ENCODE measurements at regions of chr15 and their contacts with region 1.

Region 1: DNA sequence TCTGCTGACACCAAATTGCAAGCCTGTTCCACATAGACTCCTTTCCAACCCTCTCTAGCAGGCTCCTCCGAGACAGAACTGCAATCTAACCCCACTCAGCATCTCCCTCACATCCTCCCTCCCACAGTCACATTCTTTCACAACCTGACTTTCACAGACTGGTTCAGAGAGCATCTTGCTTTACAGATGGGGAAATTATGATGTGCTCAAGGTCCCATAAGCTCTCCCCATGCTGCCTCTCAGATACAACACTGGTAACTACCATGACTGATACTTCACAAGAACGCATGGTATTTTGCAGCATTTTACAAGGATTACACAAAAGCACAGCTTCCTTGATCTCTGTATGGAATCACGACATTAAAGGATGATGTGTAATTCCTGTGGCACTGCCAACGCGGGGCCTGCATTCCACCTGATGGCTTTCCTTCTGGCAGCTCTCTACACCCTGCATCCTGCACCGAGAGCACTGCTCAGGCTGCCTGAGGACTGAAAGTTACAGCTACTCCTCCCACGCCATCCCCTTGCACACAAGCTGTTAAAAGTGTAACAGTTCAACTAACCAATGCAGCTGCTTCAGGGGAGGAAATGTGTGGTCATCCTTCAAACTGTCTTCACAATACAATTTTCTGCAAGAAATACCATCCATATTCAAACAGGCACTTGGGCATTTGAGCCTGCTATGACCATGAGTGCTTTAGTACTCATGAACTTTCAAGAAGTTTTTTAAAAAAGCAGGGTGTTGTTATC is 27.6 kb downstream of the TBC1D2B start:
- DNase-seq: peak; percentile 83
- H3K4me3 Mint-ChIP-seq: peak overlapping the region; percentile 16
- H3K27ac Mint-ChIP-seq: peak overlapping the region; percentile 80
- H3K4me1 Mint-ChIP-seq: peaks cover 78% of the 10 kb centered on the region
- H3K27me3 Mint-ChIP-seq: no peaks in the 10 kb centered on the region

Region 2: DNA sequence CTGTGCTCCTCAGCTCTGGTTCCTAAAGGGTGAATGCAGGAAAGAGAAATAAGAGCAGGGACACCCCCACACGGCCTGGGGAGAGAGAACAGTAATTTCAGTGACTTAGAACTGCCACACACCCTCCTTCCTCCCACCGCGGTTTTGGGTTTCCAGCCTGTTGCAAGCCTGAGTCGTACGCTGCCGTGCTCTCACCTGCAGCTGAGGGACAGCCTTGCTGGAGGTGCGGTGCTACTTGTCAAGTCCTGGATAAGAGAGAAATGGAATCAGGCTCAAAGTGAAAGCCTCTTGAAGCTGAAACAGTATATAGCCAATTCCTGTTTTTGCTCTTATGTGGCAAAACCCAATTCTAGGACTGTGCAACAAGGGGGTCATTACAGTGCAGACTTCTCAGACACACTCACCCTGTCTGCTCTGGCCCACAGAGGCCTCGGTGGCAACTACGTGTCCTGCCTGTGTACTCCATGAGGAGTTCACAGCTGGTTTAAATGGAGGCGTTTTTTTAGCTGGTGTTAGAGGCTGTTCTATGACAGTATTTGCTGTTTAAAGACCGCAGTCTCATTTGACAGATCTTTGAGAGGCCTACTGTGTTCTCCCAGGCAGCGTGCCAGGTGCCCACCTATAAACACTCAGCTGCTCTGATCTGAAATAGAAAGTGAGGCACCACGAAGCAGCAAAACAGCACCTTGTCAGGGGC is 15.2 kb before region 1 on chr15:
- CTCF ChIA-PET with region 1: interaction called, 18 read pairs
- intact Hi-C with region 1: loop called (anchors 1 kb)
- DNase-seq: peak; percentile 97
- H3K4me3 Mint-ChIP-seq: peak overlapping the region; percentile 38
- H3K27ac Mint-ChIP-seq: peak overlapping the region; percentile 65
- H3K4me1 Mint-ChIP-seq: peaks cover 78% of the 10 kb centered on the region
- H3K27me3 Mint-ChIP-seq: no peaks in the 10 kb centered on the region

Region 3: GRCh38 chr15:78060232-78060631 is 10.4 kb after region 1 on chr15:
- CTCF ChIA-PET with region 1: interaction called, 8 read pairs
- intact Hi-C with region 1: loop called (anchors 1 kb)
- DNase-seq: peak; percentile 39
- H3K4me3 Mint-ChIP-seq: no peak overlapping the region
- H3K27ac Mint-ChIP-seq: no peak overlapping the region
- H3K4me1 Mint-ChIP-seq: peaks cover 59% of the 10 kb centered on the region
- H3K27me3 Mint-ChIP-seq: no peaks in the 10 kb centered on the region

Region 4: DNA sequence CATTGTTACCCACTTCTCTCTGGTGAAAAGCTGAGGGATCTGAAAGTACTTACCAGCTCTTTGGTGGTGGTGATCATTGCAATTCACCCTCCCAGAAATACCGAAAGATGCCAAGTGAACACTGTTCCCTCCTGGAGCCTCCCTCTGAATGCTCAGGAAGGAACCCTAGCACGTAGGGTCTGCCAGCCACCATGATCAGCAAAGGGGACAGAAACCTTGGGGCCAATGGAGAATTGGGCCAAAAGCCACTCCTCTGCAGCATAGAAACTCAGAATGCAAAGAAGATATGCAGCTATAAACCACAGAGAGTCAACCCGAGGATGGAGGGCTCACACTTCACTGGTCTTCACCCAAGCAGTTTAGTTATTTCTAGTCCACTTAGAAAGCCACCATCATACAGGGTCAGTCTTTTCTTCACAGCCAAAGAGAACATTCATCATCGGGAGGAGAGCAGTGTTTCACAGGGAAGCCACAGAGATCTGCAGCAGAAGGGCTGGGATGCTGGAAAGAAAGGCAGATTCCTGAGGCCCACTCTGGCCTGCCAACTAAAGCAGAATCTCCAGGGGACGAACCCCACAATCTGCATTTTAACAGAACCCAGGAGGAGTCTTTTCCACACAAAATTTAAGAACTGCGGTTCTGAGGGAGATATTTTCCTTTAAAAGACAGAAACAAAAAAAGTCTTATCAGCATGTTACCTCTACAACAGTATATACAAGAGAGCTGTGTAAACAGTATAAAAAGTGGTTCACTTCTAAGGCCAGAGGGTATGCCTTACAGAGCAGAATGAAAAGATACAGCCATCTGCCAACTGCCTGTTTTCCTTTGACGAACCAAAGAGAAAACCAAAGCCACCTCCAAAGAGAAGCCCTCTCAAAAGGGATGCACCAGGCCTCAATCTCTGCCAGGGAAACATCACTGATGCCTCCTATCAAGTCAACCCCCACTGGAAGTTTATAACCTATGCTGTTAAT is 16.4 kb after region 1 on chr15:
- CTCF ChIA-PET with region 1: interaction called, 10 read pairs
- intact Hi-C with region 1: loop called (anchors 1 kb)
- DNase-seq: no peak
- H3K4me3 Mint-ChIP-seq: no peak overlapping the region
- H3K27ac Mint-ChIP-seq: peak overlapping the region; percentile 34
- H3K4me1 Mint-ChIP-seq: peaks cover 12% of the 10 kb centered on the region
- H3K27me3 Mint-ChIP-seq: no peaks in the 10 kb centered on the region

Region 5: DNA sequence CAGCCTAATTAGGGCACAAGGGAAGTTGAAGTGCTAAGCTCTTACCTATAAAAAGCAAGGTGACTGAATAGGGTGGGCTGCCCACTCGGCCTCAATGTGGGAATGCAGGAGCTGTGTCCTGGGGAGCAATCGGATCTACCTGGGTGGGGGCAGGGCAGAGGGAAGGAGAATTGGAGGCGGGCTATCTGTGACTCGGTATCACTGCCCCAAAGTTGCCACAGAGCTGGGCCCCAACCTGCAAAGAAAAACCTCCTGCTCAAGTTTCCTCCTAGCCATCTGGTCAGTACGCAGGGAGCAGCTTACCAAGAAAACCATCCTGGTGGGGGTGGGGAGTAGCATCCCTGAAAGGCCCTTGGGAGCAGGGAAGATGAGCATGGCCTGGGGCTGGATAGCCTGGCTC is 70.7 kb after region 1 on chr15:
- CTCF ChIA-PET with region 1: no interaction called
- intact Hi-C with region 1: no loop called
- DNase-seq: no peak
- H3K4me3 Mint-ChIP-seq: no peak overlapping the region
- H3K27ac Mint-ChIP-seq: no peak overlapping the region
- H3K4me1 Mint-ChIP-seq: no peaks in the 10 kb centered on the region
- H3K27me3 Mint-ChIP-seq: no peaks in the 10 kb centered on the region